Activated CD4-positive, alpha-beta memory T cell treated with anti-CD3 and anti-CD28 coated beads for 36 hours (primary cell): ENCODE measurements at regions of chr20 and their contacts with region 1.

Region 1: GRCh38 chr20:62386383-62387218 is at the start of gene RPS21:
- DNase-seq: peak; percentile 95
- H3K4me3 Mint-ChIP-seq: peak within 1 kb of the TSS; percentile 90
- H3K27ac Mint-ChIP-seq: peak within 1 kb of the TSS; percentile 87
- H3K4me1 Mint-ChIP-seq: peaks cover 42% of the 10 kb centered on the region
- H3K27me3 Mint-ChIP-seq: no peaks in the 10 kb centered on the region
- total RNA-seq, gene RPS21: 2,488 to 2,529 TPM

Region 2: GRCh38 chr20:62237801-62238571 is 148.6 kb before region 1 on chr20 and contains the start of gene OSBPL2:
- CTCF ChIA-PET with region 1: no interaction called
- POLR2A ChIA-PET with region 1: no interaction called
- intact Hi-C with region 1: loop called (anchors 5 kb)
- DNase-seq: peak; percentile 100
- H3K4me3 Mint-ChIP-seq: peak within 1 kb of the TSS; percentile 78
- H3K27ac Mint-ChIP-seq: peak within 1 kb of the TSS; percentile 80
- H3K4me1 Mint-ChIP-seq: peaks cover 37% of the 10 kb centered on the region
- H3K27me3 Mint-ChIP-seq: no peaks in the 10 kb centered on the region
- total RNA-seq, gene OSBPL2: 25.4 to 29.3 TPM

Region 3: DNA sequence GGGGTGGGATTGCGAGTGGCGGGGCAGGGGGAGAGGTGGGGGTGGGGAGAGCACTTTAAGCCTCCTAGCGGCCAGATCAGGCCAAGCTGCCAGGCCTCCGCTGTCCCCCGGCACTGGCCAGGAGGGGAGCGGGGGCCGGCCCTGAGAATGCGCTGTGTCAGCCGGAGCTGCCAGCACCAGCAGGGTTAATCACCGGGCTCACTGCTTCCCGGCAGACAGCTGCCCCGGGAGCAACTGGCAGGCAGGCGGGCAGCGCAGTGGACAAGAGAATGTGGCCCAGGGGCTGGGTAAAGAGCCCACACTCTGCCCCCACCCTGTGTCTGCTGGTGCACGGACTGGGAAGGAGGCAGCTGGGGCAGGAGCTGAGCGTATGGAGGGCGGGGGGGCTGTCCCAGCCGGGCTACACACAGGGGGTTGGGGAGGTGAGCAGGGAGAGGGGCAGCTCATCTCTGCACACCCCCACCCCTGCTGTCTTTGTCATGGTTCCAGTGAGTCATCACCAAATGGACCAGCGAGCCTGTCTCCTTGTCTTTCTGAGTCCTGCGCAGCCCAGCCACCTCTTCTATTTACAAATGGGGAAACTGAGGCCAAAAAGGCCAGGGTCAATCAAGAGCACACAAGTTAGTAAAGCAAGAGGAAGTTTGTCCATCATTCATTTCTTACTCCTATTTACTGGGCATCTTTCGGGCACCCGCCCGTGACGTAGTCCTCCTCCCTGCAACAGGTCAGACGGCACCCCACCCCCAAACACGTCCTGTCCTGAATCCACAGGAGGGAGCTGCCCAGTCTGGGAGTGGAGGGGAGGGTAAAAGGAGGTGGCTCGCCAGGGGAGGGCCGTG is 17.4 kb before region 1 on chr20:
- CTCF ChIA-PET with region 1: interaction called, 15 read pairs
- POLR2A ChIA-PET with region 1: interaction called, 3 read pairs
- intact Hi-C with region 1: no loop called
- DNase-seq: no peak
- H3K4me3 Mint-ChIP-seq: no peak overlapping the region
- H3K27ac Mint-ChIP-seq: no peak overlapping the region
- H3K4me1 Mint-ChIP-seq: peaks cover 2% of the 10 kb centered on the region
- H3K27me3 Mint-ChIP-seq: peaks cover 24% of the 10 kb centered on the region

Region 4: DNA sequence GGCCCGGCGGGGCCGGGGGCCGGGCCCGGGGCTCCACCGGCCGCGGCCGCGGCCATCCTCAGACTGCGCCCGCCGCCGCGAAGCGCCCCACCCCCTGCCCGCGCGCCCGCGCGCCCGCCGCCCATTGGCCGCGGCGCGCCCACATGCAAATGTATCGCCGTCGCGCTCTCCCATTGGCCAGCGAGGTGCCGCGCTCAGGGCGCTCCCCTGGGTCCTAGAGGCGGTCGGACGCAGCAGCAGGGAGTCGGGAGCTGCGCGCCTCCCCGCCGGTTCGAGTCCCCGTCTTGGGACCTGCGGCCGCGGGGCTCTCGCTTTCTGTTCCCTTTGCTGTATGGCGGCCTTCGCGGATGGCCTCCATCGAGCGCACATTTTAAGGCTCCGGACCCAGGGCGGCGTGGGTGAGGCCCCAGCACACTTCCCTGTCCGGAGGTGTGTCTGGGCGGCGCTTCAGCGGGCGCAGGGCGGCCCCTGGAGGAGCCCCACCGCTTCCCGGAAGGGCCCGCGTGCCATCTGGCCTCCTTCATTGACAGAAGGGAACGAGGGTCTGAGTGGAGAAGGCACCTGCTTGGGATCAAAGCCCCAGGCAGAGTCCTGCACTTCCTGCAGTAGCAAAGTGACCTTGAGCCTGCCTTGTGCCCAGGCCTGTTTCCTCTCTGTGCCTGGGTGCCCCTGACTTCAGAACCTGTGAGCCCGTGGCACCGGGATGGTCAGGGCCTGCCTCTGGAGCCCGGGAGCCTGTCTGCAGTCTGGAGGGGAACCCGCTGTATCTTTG is 20.8 kb after region 1 on chr20 and contains the start of gene CABLES2:
- CTCF ChIA-PET with region 1: interaction called, 3 read pairs
- POLR2A ChIA-PET with region 1: interaction called, 4 read pairs
- intact Hi-C with region 1: loop called (anchors 1 kb)
- DNase-seq: peak; percentile 95
- H3K4me3 Mint-ChIP-seq: peak within 1 kb of the TSS; percentile 78
- H3K27ac Mint-ChIP-seq: peak within 1 kb of the TSS; percentile 69
- H3K4me1 Mint-ChIP-seq: peaks cover 23% of the 10 kb centered on the region
- H3K27me3 Mint-ChIP-seq: no peaks in the 10 kb centered on the region
- total RNA-seq, gene CABLES2: 7.8 to 8.2 TPM